GM12878 (cell line): ENCODE measurements at regions of chr1 and their contacts with region 1.

Region 1: DNA sequence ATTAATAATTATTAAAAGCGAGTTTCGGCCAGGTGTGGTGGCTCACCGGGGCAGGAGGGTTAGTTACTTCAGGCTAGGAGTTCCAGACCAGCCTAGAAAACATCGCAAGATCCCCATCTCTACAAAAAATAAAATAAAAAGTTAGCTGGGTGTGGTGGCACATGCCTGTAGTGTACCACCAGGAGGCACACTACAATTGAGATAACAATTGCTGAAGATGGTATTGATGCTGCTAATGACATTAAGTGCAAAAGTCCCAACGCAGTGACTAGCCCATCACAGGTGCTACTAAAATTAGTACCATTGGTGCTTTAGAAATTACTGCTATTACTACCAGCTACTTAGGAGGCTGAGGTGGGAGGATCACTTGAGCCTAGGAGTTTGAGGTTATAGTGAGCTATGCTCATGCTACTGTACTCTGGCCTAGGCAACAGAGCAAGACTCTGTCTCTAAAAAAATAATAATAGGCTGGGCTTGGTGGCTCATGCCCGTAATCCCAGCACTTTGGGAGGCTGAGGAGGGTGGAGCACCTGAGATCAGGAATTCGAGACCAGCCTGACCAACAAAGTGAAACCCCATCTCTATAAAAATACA is 156.6 kb downstream of the GREM2 start:
- DNase-seq: no peak
- ATAC-seq: peak; percentile 93
- H3K4me3 ChIP-seq: no peak overlapping the region
- H3K27ac ChIP-seq: no peak overlapping the region
- H3K4me1 ChIP-seq: no peaks in the 10 kb centered on the region
- H3K27me3 ChIP-seq: no peaks in the 10 kb centered on the region
- CTCF ChIP-seq: peak in 2 of 3 experiments; percentile 48 to 55; a peak in 3 of 6 replicates
- EP300 ChIP-seq: no peak
- POLR2A ChIP-seq: no peak
- RAD21 ChIP-seq: no peak

Region 2: DNA sequence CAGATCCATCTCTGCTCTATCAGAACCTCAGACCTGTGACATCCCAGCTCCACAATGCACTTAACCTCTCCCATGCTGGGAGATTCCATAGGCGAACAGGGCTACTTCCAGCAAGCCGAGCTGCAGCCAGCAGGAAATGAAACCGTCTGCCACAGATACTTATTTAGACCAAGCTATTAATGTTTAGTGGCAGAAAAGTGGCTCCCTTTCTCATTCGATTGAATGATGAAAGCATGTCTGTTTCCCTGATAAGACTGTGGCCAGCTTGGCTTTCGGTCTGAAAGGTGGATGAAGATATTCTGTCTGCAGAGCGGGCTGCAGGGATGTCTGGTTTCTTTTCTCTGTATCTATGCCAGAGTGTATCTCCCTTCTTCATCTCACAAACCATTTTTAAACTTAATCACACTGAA is 10.2 kb after region 1 on chr1:
- CTCF ChIA-PET with region 1: interaction called, 10 read pairs
- POLR2A ChIA-PET with region 1: interaction called, 6 read pairs
- RAD21 ChIA-PET with region 1: interaction called, 16 read pairs
- SMC1A ChIA-PET with region 1: interaction called, 20 read pairs
- in situ Hi-C with region 1: no loop called
- intact Hi-C with region 1: no loop called
- DNase-seq: no peak
- ATAC-seq: peak; percentile 43
- H3K4me3 ChIP-seq: no peak overlapping the region
- H3K27ac ChIP-seq: no peak overlapping the region
- H3K4me1 ChIP-seq: no peaks in the 10 kb centered on the region
- H3K27me3 ChIP-seq: no peaks in the 10 kb centered on the region
- CTCF ChIP-seq: no peak
- EP300 ChIP-seq: no peak
- POLR2A ChIP-seq: no peak
- RAD21 ChIP-seq: no peak

Region 3: DNA sequence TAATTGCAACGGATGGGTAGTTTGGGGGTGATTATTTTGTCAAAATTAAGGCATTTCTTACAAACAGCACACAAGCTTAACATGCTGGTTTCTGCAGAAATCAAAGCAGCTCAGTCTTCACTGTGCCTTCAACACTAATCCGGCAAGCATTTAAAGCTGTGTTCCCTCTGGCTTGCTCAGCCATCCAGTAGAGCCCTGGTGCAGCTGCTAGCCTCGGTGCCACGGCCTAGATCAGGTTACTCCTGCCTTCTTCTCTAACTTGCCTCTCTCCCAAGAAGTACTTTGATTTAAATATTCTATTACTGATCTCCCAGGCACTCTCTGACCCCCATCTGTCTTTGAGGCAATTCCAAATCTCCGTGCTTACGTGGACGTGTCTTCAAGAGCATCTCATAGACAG is 71.0 kb after region 1 on chr1:
- CTCF ChIA-PET with region 1: no interaction called
- POLR2A ChIA-PET with region 1: no interaction called
- RAD21 ChIA-PET with region 1: no interaction called
- SMC1A ChIA-PET with region 1: no interaction called
- in situ Hi-C with region 1: no loop called
- intact Hi-C with region 1: no loop called
- DNase-seq: no peak
- ATAC-seq: no peak
- H3K4me3 ChIP-seq: no peak overlapping the region
- H3K27ac ChIP-seq: no peak overlapping the region
- H3K4me1 ChIP-seq: no peaks in the 10 kb centered on the region
- H3K27me3 ChIP-seq: no peaks in the 10 kb centered on the region
- CTCF ChIP-seq: no peak
- EP300 ChIP-seq: no peak
- POLR2A ChIP-seq: no peak
- RAD21 ChIP-seq: no peak

Region 4: GRCh38 chr1:240602189-240602588 is 146.9 kb after region 1 on chr1:
- CTCF ChIA-PET with region 1: interaction called, 54 read pairs
- POLR2A ChIA-PET with region 1: no interaction called
- RAD21 ChIA-PET with region 1: interaction called, 18 read pairs
- SMC1A ChIA-PET with region 1: interaction called, 46 read pairs
- in situ Hi-C with region 1: no loop called
- intact Hi-C with region 1: loop called (anchors 1 kb)
- DNase-seq: no peak
- ATAC-seq: no peak
- H3K4me3 ChIP-seq: no peak overlapping the region
- H3K27ac ChIP-seq: no peak overlapping the region
- H3K4me1 ChIP-seq: no peaks in the 10 kb centered on the region
- H3K27me3 ChIP-seq: no peaks in the 10 kb centered on the region
- CTCF ChIP-seq: no peak; a peak in 1 of 6 replicates
- EP300 ChIP-seq: no peak
- POLR2A ChIP-seq: no peak
- RAD21 ChIP-seq: no peak

Region 5: GRCh38 chr1:240608707-240609106 is 153.4 kb after region 1 on chr1:
- CTCF ChIA-PET with region 1: interaction called, 54 read pairs
- POLR2A ChIA-PET with region 1: no interaction called
- RAD21 ChIA-PET with region 1: interaction called, 30 read pairs
- SMC1A ChIA-PET with region 1: interaction called, 17 read pairs
- in situ Hi-C with region 1: no loop called
- intact Hi-C with region 1: loop called (anchors 1 kb)
- DNase-seq: no peak
- ATAC-seq: peak; percentile 59; the same call in 2 of the 3 replicates
- H3K4me3 ChIP-seq: no peak overlapping the region
- H3K27ac ChIP-seq: no peak overlapping the region
- H3K4me1 ChIP-seq: no peaks in the 10 kb centered on the region
- H3K27me3 ChIP-seq: peaks cover 0 to 2% of the 10 kb centered on the region in 2 experiments; a peak in 1 of 4 replicates
- CTCF ChIP-seq: peak in 2 of 3 experiments; percentile 28 to 39; a peak in 2 of 6 replicates
- EP300 ChIP-seq: no peak
- POLR2A ChIP-seq: no peak
- RAD21 ChIP-seq: no peak

Region 6: GRCh38 chr1:240691521-240692338 is 236.4 kb after region 1 on chr1:
- CTCF ChIA-PET with region 1: interaction called, 13 read pairs
- POLR2A ChIA-PET with region 1: no interaction called
- RAD21 ChIA-PET with region 1: interaction called, 7 read pairs
- SMC1A ChIA-PET with region 1: interaction called, 7 read pairs
- in situ Hi-C with region 1: no loop called
- intact Hi-C with region 1: loop called (anchors 2 kb)
- DNase-seq: no peak
- ATAC-seq: no peak
- H3K4me3 ChIP-seq: no peak overlapping the region
- H3K27ac ChIP-seq: no peak overlapping the region
- H3K4me1 ChIP-seq: no peaks in the 10 kb centered on the region
- H3K27me3 ChIP-seq: no peaks in the 10 kb centered on the region
- CTCF ChIP-seq: peak in 2 of 3 experiments; percentile 25 to 36; a peak in 3 of 6 replicates
- EP300 ChIP-seq: no peak
- POLR2A ChIP-seq: no peak
- RAD21 ChIP-seq: no peak; the same call in 1 of the 2 replicates